Ascending aorta (tissue), 2 donors: ENCODE measurements at regions of chr10 and their contacts with region 1.

Region 1: GRCh38 chr10:19629567-19629966 is 186.7 kb upstream of the PLXDC2 start:
- DNase-seq: peak; percentile 26 to 89
- H3K4me3 ChIP-seq: peak overlapping the region in 1 of 2 donors; percentile 18
- H3K27ac ChIP-seq: peak overlapping the region; percentile 54 to 76
- H3K4me1 ChIP-seq: peaks cover 0 to 11% of the 10 kb centered on the region in 2 donors
- H3K27me3 ChIP-seq: no peaks in the 10 kb centered on the region
- CTCF ChIP-seq: peak in 2 of 3 experiments; percentile 27 to 33

Region 2: GRCh38 chr10:19563388-19564141 is 66.0 kb before region 1 on chr10:
- intact Hi-C with region 1: loop called (anchors 5 kb)
- DNase-seq: no peak
- H3K4me3 ChIP-seq: no peak overlapping the region
- H3K27ac ChIP-seq: peak overlapping the region; percentile 31 to 79
- H3K4me1 ChIP-seq: peaks cover 0 to 10% of the 10 kb centered on the region in 2 donors
- H3K27me3 ChIP-seq: no peaks in the 10 kb centered on the region
- CTCF ChIP-seq: no peak

Region 3: DNA sequence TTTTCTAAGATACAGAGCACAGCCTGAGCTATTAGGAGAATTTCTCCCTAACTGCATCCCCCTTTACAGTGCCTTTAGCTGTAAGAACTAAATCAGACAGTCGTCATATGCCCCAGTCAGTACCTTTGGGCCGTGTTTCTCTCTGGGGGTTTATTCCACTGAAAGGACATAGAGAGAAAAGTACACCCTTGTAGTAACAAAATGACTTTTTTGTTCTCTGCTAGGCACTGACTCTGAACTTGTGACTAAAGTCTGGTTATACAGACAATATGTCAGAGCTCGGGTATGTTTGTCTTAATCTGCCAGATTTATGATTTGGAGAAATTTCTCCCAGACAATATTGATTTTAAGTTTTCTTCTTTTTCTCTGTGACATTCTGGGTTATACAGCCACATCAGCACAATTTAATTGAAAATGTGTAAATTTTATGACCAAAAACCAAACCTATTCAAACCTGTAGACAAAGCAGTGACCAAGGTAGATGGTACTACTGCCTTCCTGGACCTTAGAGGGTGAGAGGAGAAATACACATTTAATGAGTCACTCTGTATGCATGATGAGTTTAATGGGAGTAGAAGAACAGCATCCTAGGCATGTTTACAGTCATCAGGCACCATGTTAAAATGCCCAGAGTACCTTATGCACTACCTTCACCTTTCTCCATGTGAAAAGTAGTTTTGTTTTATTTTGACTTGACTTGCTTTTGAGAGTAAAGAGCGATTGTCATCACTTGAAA is 30.5 kb after region 1 on chr10:
- intact Hi-C with region 1: loop called (anchors 5 kb)
- DNase-seq: no peak
- H3K4me3 ChIP-seq: no peak overlapping the region
- H3K27ac ChIP-seq: peak overlapping the region; percentile 68 to 73
- H3K4me1 ChIP-seq: peaks cover 0 to 27% of the 10 kb centered on the region in 2 donors
- H3K27me3 ChIP-seq: no peaks in the 10 kb centered on the region
- CTCF ChIP-seq: no peak